Body of pancreas (tissue), 4 donors: ENCODE measurements at regions of chr6 and their contacts with region 1.

Region 1: GRCh38 chr6:44338228-44339122 is 4.0 kb upstream of the SPATS1 start:
- DNase-seq: peak; percentile 66 to 75 (median 68)
- ATAC-seq: peak; percentile 84
- H3K4me3 ChIP-seq: no peak overlapping the region
- H3K27ac ChIP-seq: peak overlapping the region in 1 of 4 donors; percentile 12
- H3K4me1 ChIP-seq: peaks cover 7% of the 10 kb centered on the region
- H3K27me3 ChIP-seq: no peaks in the 10 kb centered on the region
- CTCF ChIP-seq: peak; percentile 62 to 85 (median 79)
- POLR2A ChIP-seq: no peak

Region 2: DNA sequence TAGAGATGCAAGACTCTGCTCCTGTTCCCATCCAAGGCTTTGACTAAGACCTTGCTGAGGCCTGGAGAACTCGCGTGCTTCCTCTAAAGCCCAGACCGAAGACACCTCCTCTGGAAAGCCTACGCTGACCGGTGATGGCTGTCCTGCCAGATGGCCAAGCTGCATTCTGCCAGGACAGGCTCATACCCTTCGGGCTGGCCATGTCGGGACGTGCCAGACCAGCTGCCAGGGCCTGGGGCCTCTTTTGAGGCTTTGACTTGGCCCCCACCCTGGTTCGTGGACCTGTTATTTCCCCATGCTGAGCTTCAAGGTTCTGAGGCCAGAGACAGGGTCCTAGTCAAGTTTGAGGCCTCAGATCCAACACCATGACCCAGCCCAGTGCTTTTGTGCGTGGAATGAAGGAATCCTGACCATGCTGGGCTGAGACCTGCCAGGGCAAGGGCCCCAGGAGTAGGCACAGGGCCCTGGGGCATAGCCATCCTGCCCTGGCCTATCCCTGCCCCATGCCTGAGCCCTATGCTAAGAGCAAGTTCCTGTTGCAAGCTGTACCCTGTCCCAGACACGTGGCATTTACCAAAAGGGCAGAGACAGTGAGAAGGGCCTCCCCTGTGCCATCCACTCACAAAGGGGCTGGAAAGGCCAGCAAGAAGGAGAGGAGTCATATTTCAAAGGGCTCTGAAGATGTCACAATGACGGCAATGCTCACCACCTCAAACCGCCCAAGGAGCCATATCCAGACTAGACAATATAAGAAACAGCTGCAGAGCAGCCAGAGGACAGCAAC is 254.1 kb before region 1 on chr6:
- intact Hi-C with region 1: no loop called
- DNase-seq: no peak
- ATAC-seq: no peak
- H3K4me3 ChIP-seq: no peak overlapping the region
- H3K27ac ChIP-seq: no peak overlapping the region
- H3K4me1 ChIP-seq: peaks cover 9% of the 10 kb centered on the region
- H3K27me3 ChIP-seq: no peaks in the 10 kb centered on the region
- CTCF ChIP-seq: no peak
- POLR2A ChIP-seq: no peak

Region 3: GRCh38 chr6:44096612-44097011 is 241.9 kb before region 1 on chr6:
- intact Hi-C with region 1: loop called (anchors 10 kb)
- DNase-seq: peak; percentile 83 to 88 (median 84)
- ATAC-seq: peak; percentile 89
- H3K4me3 ChIP-seq: no peak overlapping the region
- H3K27ac ChIP-seq: no peak overlapping the region
- H3K4me1 ChIP-seq: peaks cover 16% of the 10 kb centered on the region
- H3K27me3 ChIP-seq: no peaks in the 10 kb centered on the region
- CTCF ChIP-seq: peak; percentile 65 to 93 (median 90)
- POLR2A ChIP-seq: no peak

Region 4: DNA sequence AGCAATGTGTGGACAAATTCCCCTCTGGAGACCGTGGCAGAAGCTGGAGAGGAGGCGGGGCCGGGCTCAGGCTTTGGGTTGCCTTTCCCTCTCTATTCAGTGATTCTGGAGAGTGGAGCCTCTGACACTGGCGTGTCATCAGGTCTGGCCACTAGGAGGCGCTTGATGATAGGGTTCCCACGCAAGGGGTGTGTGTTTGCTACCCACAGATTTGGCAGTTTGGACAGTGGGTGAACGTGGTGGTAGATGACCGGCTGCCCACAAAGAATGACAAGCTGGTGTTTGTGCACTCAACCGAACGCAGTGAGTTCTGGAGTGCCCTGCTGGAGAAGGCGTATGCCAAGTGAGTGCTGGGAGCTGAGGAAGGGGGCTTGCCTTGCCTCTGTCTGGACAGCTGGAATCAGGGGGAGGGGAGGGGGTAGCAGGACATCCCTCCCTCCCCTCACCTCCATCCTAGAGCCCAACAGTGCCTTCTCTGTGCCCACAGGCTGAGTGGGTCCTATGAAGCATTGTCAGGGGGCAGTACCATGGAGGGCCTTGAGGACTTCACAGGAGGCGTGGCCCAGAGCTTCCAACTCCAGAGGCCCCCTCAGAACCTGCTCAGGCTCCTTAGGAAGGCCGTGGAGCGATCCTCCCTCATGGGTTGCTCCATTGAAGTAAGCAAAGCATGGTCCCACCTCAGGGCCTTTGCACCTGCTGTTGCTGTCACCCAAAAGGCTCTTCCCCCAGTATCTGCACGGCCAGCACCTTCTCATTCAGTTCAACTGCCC is 165.6 kb before region 1 on chr6:
- intact Hi-C with region 1: loop called (anchors 10 kb)
- DNase-seq: peak; percentile 86 to 90 (median 88)
- ATAC-seq: peak; percentile 94
- H3K4me3 ChIP-seq: no peak overlapping the region
- H3K27ac ChIP-seq: no peak overlapping the region
- H3K4me1 ChIP-seq: peaks cover 4% of the 10 kb centered on the region
- H3K27me3 ChIP-seq: no peaks in the 10 kb centered on the region
- CTCF ChIP-seq: peak; percentile 58 to 95 (median 90)
- POLR2A ChIP-seq: no peak

Region 5: GRCh38 chr6:44270526-44271405 is 67.7 kb before region 1 on chr6:
- intact Hi-C with region 1: loop called (anchors 5 kb)
- DNase-seq: no peak
- ATAC-seq: no peak
- H3K4me3 ChIP-seq: no peak overlapping the region
- H3K27ac ChIP-seq: no peak overlapping the region
- H3K4me1 ChIP-seq: peaks cover 5% of the 10 kb centered on the region
- H3K27me3 ChIP-seq: peaks cover 0 to 13% of the 10 kb centered on the region in 2 donors
- CTCF ChIP-seq: no peak
- POLR2A ChIP-seq: no peak